ENCODE measurements at regions of chr3 and their contacts with region 1.

Region 1: GRCh38 chr3:36993326-36994283 is at the start of gene MLH1:
- DNase-seq: peak; percentile 85 to 100 (median 93)
- ATAC-seq: peak; percentile 87 to 90 (median 88)
- H3K4me3 ChIP-seq: peak within 1 kb of the TSS; percentile 91 to 92
- H3K4me3 Mint-ChIP-seq: no peak within 1 kb of the TSS
- H3K27ac ChIP-seq: peak within 1 kb of the TSS; percentile 99
- H3K27ac Mint-ChIP-seq: no peak within 1 kb of the TSS
- H3K4me1 ChIP-seq: peaks cover 25 to 46% of the 10 kb centered on the region in 2 experiments
- H3K4me1 Mint-ChIP-seq: peaks cover 28 to 44% (median 39%) of the 10 kb centered on the region in 3 donors
- H3K27me3 ChIP-seq: no peaks in the 10 kb centered on the region
- H3K27me3 Mint-ChIP-seq: no peaks in the 10 kb centered on the region
- total RNA-seq, gene MLH1: 24.7 to 32.4 (median 28.6) TPM

Region 2: DNA sequence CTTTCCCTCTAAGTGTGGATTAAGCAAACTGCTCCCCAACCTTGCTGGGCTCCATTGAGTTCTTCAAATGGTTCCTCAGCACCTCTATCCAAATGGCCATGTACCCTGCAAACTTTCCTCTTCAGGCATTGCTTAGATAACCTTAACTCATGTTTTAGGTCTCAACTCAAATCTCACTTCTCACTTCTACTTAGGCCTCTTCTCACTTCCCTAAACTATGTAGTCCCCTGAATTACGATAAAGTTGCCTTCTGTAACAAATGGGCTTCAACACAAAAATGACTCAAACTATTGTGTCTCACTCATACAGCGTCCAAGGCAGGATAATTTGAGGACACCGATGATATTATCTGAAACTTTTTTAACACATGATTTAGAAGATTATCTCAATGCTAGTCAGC is 675.7 kb before region 1 on chr3:
- CTCF ChIA-PET with region 1: no interaction called
- POLR2A ChIA-PET with region 1: no interaction called
- DNase-seq: no peak
- ATAC-seq: no peak
- H3K4me3 ChIP-seq: no peak overlapping the region
- H3K4me3 Mint-ChIP-seq: no peak overlapping the region
- H3K27ac ChIP-seq: no peak overlapping the region
- H3K27ac Mint-ChIP-seq: no peak overlapping the region
- H3K4me1 ChIP-seq: no peaks in the 10 kb centered on the region
- H3K4me1 Mint-ChIP-seq: no peaks in the 10 kb centered on the region
- H3K27me3 ChIP-seq: no peaks in the 10 kb centered on the region
- H3K27me3 Mint-ChIP-seq: peaks cover 0 to 4% of the 10 kb centered on the region in 2 donors

Region 3: GRCh38 chr3:36837089-36837488 is 156.5 kb before region 1 on chr3:
- CTCF ChIA-PET with region 1: no interaction called
- POLR2A ChIA-PET with region 1: no interaction called
- DNase-seq: no peak
- ATAC-seq: no peak
- H3K4me3 ChIP-seq: no peak overlapping the region
- H3K4me3 Mint-ChIP-seq: no peak overlapping the region
- H3K27ac ChIP-seq: no peak overlapping the region
- H3K27ac Mint-ChIP-seq: peak overlapping the region in 1 of 2 donors; percentile 53
- H3K4me1 ChIP-seq: no peaks in the 10 kb centered on the region
- H3K4me1 Mint-ChIP-seq: peaks cover 0 to 6% (median 3%) of the 10 kb centered on the region in 3 donors
- H3K27me3 ChIP-seq: no peaks in the 10 kb centered on the region
- H3K27me3 Mint-ChIP-seq: no peaks in the 10 kb centered on the region

Region 4: GRCh38 chr3:36876181-36876936 is 117.2 kb before region 1 on chr3:
- CTCF ChIA-PET with region 1: interaction called in 1 of 2 experiments, 8 read pairs
- POLR2A ChIA-PET with region 1: interaction called in 1 of 2 experiments, 18 read pairs
- DNase-seq: peak in 25 of 35 experiments; percentile 4 to 78 (median 17)
- ATAC-seq: peak; percentile 86 to 92 (median 91)
- H3K4me3 ChIP-seq: peak overlapping the region; percentile 18 to 23
- H3K4me3 Mint-ChIP-seq: peak overlapping the region; percentile 61 to 76 (median 66)
- H3K27ac ChIP-seq: peak overlapping the region; percentile 89
- H3K27ac Mint-ChIP-seq: peak overlapping the region; percentile 94 to 99
- H3K4me1 ChIP-seq: peaks cover 23 to 30% of the 10 kb centered on the region in 2 experiments
- H3K4me1 Mint-ChIP-seq: peaks cover 55 to 65% (median 57%) of the 10 kb centered on the region in 3 donors
- H3K27me3 ChIP-seq: no peaks in the 10 kb centered on the region
- H3K27me3 Mint-ChIP-seq: no peaks in the 10 kb centered on the region

Region 5: DNA sequence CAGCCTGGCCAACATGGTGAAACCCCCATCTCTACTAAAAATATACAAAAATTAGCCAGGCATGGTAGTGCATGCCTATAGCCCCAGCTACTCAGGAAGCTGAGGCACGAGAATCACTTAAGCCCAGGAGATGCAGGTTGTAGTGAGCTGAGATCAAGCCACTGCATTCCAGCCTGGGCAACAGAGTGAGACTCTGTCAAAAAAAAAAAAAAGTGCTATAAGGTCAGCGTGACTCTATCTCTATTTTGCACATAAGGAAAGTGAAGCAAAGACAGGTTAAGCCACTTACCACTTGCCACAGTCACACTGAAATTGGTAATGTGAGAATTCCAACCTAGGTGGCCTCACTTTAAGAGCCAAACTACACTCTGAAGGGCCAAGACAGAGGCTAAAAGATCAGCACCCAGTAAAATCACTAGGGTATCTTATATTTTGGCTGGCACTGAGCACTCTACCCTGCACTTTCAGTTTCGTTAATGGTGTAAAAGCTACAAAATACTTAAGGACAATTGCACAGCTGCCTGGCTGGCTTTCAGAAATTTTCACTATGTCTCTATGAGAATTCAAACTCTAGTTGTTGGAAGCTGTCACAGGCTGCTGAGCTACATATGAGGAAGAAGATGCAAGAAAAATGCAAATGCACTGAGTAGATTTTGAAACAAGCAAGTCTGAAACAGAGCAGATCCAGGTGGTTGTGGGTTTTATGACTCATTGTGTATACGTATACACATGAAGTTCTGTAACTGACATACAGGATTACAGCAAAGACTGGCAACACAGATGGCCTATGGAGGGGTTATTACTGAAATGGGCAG is 81.4 kb before region 1 on chr3:
- CTCF ChIA-PET with region 1: interaction called in 1 of 2 experiments, 5 read pairs
- POLR2A ChIA-PET with region 1: interaction called in 1 of 2 experiments, 14 read pairs
- DNase-seq: peak in 20 of 35 experiments; percentile 2 to 72 (median 24)
- ATAC-seq: peak; percentile 83 to 86 (median 84)
- H3K4me3 ChIP-seq: peak overlapping the region; percentile 23 to 47
- H3K4me3 Mint-ChIP-seq: peak overlapping the region; percentile 55 to 72 (median 70)
- H3K27ac ChIP-seq: peak overlapping the region; percentile 88
- H3K27ac Mint-ChIP-seq: peak overlapping the region; percentile 83 to 88
- H3K4me1 ChIP-seq: peaks cover 19 to 29% of the 10 kb centered on the region in 2 experiments
- H3K4me1 Mint-ChIP-seq: peaks cover 41 to 56% (median 48%) of the 10 kb centered on the region in 3 donors
- H3K27me3 ChIP-seq: no peaks in the 10 kb centered on the region
- H3K27me3 Mint-ChIP-seq: no peaks in the 10 kb centered on the region

Region 6: GRCh38 chr3:37227870-37228549 is 234.4 kb after region 1 on chr3:
- CTCF ChIA-PET with region 1: no interaction called
- POLR2A ChIA-PET with region 1: interaction called, 3 to 11 read pairs
- DNase-seq: peak in 2 of 35 experiments; percentile 2 to 17
- ATAC-seq: no peak
- H3K4me3 ChIP-seq: no peak overlapping the region
- H3K4me3 Mint-ChIP-seq: no peak overlapping the region
- H3K27ac ChIP-seq: peak overlapping the region; percentile 31
- H3K27ac Mint-ChIP-seq: no peak overlapping the region
- H3K4me1 ChIP-seq: peaks cover 11 to 24% of the 10 kb centered on the region in 2 experiments
- H3K4me1 Mint-ChIP-seq: peaks cover 10 to 32% (median 24%) of the 10 kb centered on the region in 3 donors
- H3K27me3 ChIP-seq: no peaks in the 10 kb centered on the region
- H3K27me3 Mint-ChIP-seq: no peaks in the 10 kb centered on the region

Region 7: DNA sequence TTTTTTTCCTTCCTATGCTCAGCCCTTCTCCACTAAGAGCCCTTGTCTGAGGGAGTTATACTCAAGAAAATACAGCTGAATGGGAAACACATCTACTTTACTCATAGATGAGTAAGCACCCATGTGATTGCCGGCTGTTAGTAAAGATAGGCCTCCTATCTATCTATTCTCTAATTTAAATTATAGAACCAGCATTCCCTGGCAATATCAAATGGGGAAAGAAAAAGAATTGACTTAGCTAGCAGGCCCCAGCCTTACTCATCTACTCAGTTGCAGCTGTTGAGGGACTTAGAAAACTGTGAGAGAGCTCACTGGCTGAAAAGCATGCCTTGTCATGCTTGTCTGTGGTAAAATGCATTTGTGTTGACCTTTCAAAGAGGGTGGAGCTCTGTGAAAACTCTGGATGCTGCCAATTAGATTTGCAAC is 297.7 kb after region 1 on chr3:
- CTCF ChIA-PET with region 1: no interaction called
- POLR2A ChIA-PET with region 1: interaction called in 1 of 2 experiments, 13 read pairs
- DNase-seq: no peak
- ATAC-seq: no peak
- H3K4me3 ChIP-seq: no peak overlapping the region
- H3K4me3 Mint-ChIP-seq: no peak overlapping the region
- H3K27ac ChIP-seq: no peak overlapping the region
- H3K27ac Mint-ChIP-seq: no peak overlapping the region
- H3K4me1 ChIP-seq: no peaks in the 10 kb centered on the region
- H3K4me1 Mint-ChIP-seq: peaks cover 0 to 23% (median 12%) of the 10 kb centered on the region in 3 donors
- H3K27me3 ChIP-seq: no peaks in the 10 kb centered on the region
- H3K27me3 Mint-ChIP-seq: no peaks in the 10 kb centered on the region